Activated CD8-positive, alpha-beta memory T cell treated with anti-CD3 and anti-CD28 coated beads, Interleukin-2, amount 10 ng/mL, durations not matched to agents 7 days and 5 days (primary cell): ENCODE measurements at regions of chr7 and their contacts with region 1.

Region 1: GRCh38 chr7:29921404-29922010 is 68.1 kb downstream of the SCRN1 start:
- DNase-seq: peak; percentile 61
- ATAC-seq: peak; percentile 84
- H3K4me3 Mint-ChIP-seq: no peak overlapping the region
- H3K27ac Mint-ChIP-seq: no peak overlapping the region
- H3K4me1 Mint-ChIP-seq: no peaks in the 10 kb centered on the region
- H3K27me3 Mint-ChIP-seq: peaks cover 13% of the 10 kb centered on the region

Region 2: GRCh38 chr7:29748286-29749108 is 173.0 kb before region 1 on chr7:
- CTCF ChIA-PET with region 1: interaction called, 14 read pairs
- DNase-seq: no peak
- ATAC-seq: no peak
- H3K4me3 Mint-ChIP-seq: no peak overlapping the region
- H3K27ac Mint-ChIP-seq: no peak overlapping the region
- H3K4me1 Mint-ChIP-seq: no peaks in the 10 kb centered on the region
- H3K27me3 Mint-ChIP-seq: peaks cover 8% of the 10 kb centered on the region

Region 3: DNA sequence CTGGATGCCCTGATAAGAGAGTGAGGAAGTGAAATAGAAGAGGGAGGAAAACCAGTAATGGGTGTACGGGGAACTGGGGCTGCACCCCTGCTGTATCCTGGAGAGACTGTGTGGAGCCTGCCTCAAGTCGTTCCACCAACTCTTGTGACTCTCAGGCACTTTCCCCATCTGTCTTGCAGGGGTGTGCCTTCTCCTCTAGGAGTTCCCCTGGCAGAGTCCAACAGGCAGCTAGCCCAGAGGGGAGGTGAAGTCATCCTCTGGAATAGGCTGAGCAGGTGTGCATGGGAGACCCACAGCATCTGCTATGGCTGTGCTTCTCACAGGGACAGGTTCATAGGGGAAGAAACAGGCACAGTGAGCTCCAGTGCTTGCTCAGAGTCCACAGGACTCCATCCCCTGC is 68.4 kb before region 1 on chr7:
- CTCF ChIA-PET with region 1: no interaction called
- DNase-seq: no peak
- ATAC-seq: no peak
- H3K4me3 Mint-ChIP-seq: no peak overlapping the region
- H3K27ac Mint-ChIP-seq: no peak overlapping the region
- H3K4me1 Mint-ChIP-seq: no peaks in the 10 kb centered on the region
- H3K27me3 Mint-ChIP-seq: peaks cover 23% of the 10 kb centered on the region

Region 4: GRCh38 chr7:29935111-29935510 is 13.6 kb after region 1 on chr7:
- CTCF ChIA-PET with region 1: interaction called, 14 read pairs
- DNase-seq: no peak
- ATAC-seq: no peak
- H3K4me3 Mint-ChIP-seq: no peak overlapping the region
- H3K27ac Mint-ChIP-seq: no peak overlapping the region
- H3K4me1 Mint-ChIP-seq: no peaks in the 10 kb centered on the region
- H3K27me3 Mint-ChIP-seq: peaks cover 12% of the 10 kb centered on the region